ENCODE measurements at regions of chr17 and their contacts with region 1.

Region 1: GRCh38 chr17:20226814-20227482 is 217.8 kb downstream of the SPECC1 start:
- DNase-seq: peak; percentile 76 to 84
- ATAC-seq: peak; percentile 86 to 98 (median 96)
- H3K4me3 ChIP-seq: no peak overlapping the region
- H3K27ac ChIP-seq: no peak overlapping the region
- H3K4me1 ChIP-seq: peaks cover 0 to 13% (median 0%) of the 10 kb centered on the region in 9 donors
- H3K27me3 ChIP-seq: no peaks in the 10 kb centered on the region
- CTCF ChIP-seq: peak; percentile 56 to 89 (median 81)

Region 2: GRCh38 chr17:20121359-20122253 is 105.3 kb before region 1 on chr17:
- intact Hi-C with region 1: loop called in 9 of 10 experiments (anchors 2 to 10 kb)
- DNase-seq: peak; percentile 47 to 61
- ATAC-seq: peak in 7 of 8 donors; percentile 27 to 78 (median 68)
- H3K4me3 ChIP-seq: no peak overlapping the region
- H3K27ac ChIP-seq: peak overlapping the region in 1 of 10 donors; percentile 18
- H3K4me1 ChIP-seq: peaks cover 0 to 24% (median 10%) of the 10 kb centered on the region in 9 donors
- H3K27me3 ChIP-seq: peaks cover 0 to 7% (median 0%) of the 10 kb centered on the region in 7 donors
- CTCF ChIP-seq: peak; percentile 65 to 94 (median 88)

Region 3: GRCh38 chr17:20128036-20128667 is 98.8 kb before region 1 on chr17:
- intact Hi-C with region 1: loop called in 9 of 10 experiments (anchors 2 to 10 kb)
- DNase-seq: no peak
- ATAC-seq: peak in 1 of 8 donors; percentile 76
- H3K4me3 ChIP-seq: no peak overlapping the region
- H3K27ac ChIP-seq: no peak overlapping the region
- H3K4me1 ChIP-seq: peaks cover 0 to 8% (median 0%) of the 10 kb centered on the region in 9 donors
- H3K27me3 ChIP-seq: peaks cover 0 to 4% (median 0%) of the 10 kb centered on the region in 7 donors
- CTCF ChIP-seq: no peak

Region 4: DNA sequence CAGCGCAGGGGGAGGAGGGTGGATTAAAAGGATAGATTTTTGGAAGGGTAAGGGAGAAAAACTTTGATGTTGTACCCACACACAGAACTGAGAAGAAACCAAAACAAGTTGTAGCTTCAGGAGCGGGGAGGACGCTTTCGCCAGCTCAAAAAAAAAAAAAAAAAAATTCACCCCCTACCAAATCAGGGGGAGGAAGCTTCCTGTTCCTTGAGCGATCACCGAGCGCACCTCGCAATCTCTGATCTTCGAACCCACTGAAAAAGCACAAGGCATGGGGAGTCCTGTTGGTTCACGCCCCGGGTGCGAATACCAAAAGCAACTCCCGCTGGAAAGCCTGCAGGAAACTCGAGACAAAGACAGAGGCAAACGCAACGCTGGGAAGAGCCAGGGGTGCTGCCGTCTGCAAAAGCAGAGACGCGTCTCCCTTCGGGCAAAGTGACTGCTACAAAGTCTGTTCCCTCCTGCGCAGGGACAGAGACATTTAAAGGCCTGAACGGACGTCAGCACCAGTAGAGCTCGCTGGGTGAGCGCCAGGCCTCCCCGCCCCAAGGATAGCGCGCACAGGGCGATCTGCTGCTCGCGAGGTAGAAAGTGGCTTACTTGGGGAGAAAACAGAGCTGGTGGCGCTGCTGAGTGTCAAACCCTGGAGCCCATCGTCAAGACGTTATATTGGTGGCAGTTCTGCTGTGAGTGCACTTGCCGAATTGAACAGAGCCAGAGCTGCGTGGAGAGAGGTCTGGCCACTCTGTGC is 625.5 kb after region 1 on chr17:
- intact Hi-C with region 1: loop called in 1 of 10 experiments (anchors 5 kb)
- DNase-seq: peak; percentile 23 to 29
- ATAC-seq: peak in 6 of 8 donors; percentile 31 to 74 (median 54)
- H3K4me3 ChIP-seq: peak overlapping the region in 7 of 10 donors; percentile 12 to 40 (median 34)
- H3K27ac ChIP-seq: no peak overlapping the region
- H3K4me1 ChIP-seq: peaks cover 0 to 13% (median 3%) of the 10 kb centered on the region in 9 donors
- H3K27me3 ChIP-seq: peaks cover 6 to 78% (median 28%) of the 10 kb centered on the region in 7 donors
- CTCF ChIP-seq: no peak